ENCODE measurements at regions of chr15 and their contacts with region 1.

Region 1: DNA sequence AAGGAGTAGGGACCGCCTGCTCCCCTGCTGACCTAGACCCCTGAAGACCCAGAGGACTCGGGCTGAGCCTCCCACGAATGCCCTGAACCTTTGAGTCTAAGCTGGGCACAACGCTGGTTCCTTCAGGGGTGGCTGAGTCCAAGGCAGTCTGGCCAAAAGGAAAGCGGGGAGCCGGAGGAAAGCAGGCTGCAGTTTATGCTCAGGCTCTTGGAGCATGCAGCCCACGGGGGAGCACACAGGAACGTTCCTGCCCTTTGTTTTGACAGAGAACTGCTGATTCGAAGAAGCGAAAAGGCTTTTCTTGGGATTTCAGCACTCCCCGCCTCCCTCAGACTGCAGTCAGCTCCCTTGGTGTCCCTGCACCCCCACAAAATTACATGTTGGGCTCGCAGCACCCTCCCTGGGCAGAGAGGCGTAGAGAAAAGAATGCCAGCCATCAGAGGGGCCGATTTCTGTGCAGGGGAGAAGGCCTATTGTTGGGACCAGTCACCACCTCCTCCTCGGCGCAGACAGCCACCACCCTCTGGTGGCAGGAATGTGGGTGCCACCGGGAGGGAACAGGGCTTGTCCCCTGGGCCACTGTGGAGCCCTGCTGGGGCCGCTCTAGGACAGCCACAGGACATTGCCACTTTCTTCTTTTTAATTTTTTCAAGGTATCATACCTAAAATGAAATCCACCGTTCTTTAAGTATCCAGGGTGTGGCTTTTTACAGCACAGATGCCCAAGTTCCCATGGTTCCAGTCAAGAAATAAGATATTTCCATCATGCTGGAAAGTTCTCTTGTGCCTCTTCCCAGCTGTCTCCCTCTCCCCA is 72.2 kb downstream of the SMAD6 start:
- DNase-seq: peak; percentile 68 to 95
- H3K4me3 ChIP-seq: peak overlapping the region in 1 of 4 experiments; percentile 23; a peak in 3 of 8 replicates
- H3K27ac ChIP-seq: peak overlapping the region; percentile 56
- H3K4me1 ChIP-seq: peaks cover 11 to 24% (median 18%) of the 10 kb centered on the region in 4 experiments
- H3K27me3 ChIP-seq: no peaks in the 10 kb centered on the region
- CTCF ChIP-seq: peak; percentile 94 to 95 (median 95)
- EP300 ChIP-seq: peak in 1 of 2 experiments; percentile 60; a peak in 1 of 3 replicates
- POLR2A ChIP-seq: no peak
- RAD21 ChIP-seq: peak; percentile 87 to 92

Region 2: GRCh38 chr15:66720206-66721006 is 53.8 kb before region 1 on chr15:
- CTCF ChIA-PET with region 1: interaction called, 11 read pairs
- POLR2A ChIA-PET with region 1: no interaction called
- DNase-seq: no peak
- H3K4me3 ChIP-seq: no peak overlapping the region
- H3K27ac ChIP-seq: no peak overlapping the region
- H3K4me1 ChIP-seq: peaks cover 0 to 4% (median 2%) of the 10 kb centered on the region in 4 experiments; a peak in 4 of 7 replicates
- H3K27me3 ChIP-seq: no peaks in the 10 kb centered on the region
- CTCF ChIP-seq: no peak
- EP300 ChIP-seq: no peak
- POLR2A ChIP-seq: no peak
- RAD21 ChIP-seq: no peak

Region 3: DNA sequence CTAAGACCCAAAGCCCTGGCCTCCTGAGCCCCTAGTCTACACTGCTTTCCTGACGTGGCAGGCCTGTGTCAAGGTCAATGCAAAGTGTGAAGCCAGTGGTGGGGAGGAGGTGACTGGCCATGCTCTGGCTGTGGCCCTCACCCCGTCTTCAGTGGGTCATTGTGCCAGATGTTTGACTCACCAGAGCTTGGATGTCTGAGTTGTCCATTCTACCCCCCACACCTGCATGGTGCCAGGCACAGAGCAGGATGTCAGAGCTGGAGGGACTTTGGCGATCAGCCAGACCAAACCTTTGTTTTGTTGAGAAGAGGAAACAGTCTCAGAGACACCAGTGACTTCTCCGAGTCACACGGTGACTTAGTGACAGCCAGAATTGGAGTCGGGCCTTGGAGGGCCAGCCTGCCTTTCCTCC is 22.7 kb before region 1 on chr15:
- CTCF ChIA-PET with region 1: interaction called, 31 read pairs
- POLR2A ChIA-PET with region 1: no interaction called
- DNase-seq: no peak
- H3K4me3 ChIP-seq: no peak overlapping the region
- H3K27ac ChIP-seq: no peak overlapping the region
- H3K4me1 ChIP-seq: peaks cover 2 to 34% (median 14%) of the 10 kb centered on the region in 4 experiments; a peak in 6 of 7 replicates
- H3K27me3 ChIP-seq: no peaks in the 10 kb centered on the region; a peak in 1 of 7 replicates
- CTCF ChIP-seq: no peak
- EP300 ChIP-seq: no peak
- POLR2A ChIP-seq: no peak
- RAD21 ChIP-seq: no peak

Region 4: DNA sequence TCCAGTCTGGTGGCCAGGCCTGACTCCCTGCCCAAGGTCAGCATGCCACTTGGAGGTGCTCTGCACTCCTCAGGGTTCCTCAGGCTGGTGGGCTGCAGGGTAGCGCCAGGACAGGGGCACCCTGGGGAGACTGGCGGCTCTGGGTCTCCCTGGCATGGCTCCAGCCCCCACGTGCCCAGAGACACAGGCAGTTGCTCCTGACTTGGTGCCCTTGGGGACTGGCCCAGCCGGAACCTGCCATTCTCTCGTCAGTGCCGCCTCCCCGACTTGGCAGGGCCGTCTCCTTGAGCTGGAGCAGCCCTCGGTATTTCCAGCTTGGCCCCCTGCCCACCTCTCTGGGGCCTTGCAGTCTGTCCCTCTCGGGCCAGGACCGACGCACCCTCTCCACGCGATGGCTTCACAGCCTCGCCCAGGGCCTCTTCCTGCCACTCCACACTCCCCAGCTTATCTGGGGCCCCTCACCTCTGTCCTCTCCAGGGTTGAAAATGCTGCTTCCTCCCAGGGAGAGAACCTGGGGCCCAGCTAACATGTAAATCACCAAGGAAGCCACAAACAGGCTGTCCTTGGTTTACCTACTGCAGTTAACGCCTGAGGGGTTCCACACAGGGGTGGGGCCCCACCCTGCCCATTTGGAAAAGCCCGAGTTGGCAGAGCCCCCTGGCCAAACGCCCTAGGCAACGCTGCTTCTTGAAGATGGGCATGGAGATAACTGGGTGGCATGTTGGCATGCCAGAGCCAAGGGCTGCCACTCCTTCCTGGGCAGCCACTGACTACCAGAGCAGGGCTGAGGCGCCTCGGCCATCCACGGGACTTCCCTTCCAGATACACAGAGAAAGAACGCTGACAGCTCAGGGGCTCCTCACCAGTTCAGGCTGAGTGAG is 10.8 kb before region 1 on chr15:
- CTCF ChIA-PET with region 1: interaction called, 13 read pairs
- POLR2A ChIA-PET with region 1: interaction called, 9 read pairs
- DNase-seq: no peak
- H3K4me3 ChIP-seq: no peak overlapping the region
- H3K27ac ChIP-seq: no peak overlapping the region
- H3K4me1 ChIP-seq: peaks cover 0 to 4% (median 2%) of the 10 kb centered on the region in 4 experiments; a peak in 3 of 7 replicates
- H3K27me3 ChIP-seq: no peaks in the 10 kb centered on the region
- CTCF ChIP-seq: no peak
- EP300 ChIP-seq: no peak
- POLR2A ChIP-seq: no peak
- RAD21 ChIP-seq: no peak

Region 5: GRCh38 chr15:66789029-66790025 is 15.1 kb after region 1 on chr15:
- CTCF ChIA-PET with region 1: interaction called, 32 read pairs
- POLR2A ChIA-PET with region 1: interaction called, 3 read pairs
- DNase-seq: no peak
- H3K4me3 ChIP-seq: no peak overlapping the region
- H3K27ac ChIP-seq: no peak overlapping the region
- H3K4me1 ChIP-seq: no peaks in the 10 kb centered on the region
- H3K27me3 ChIP-seq: no peaks in the 10 kb centered on the region; a peak in 1 of 7 replicates
- CTCF ChIP-seq: peak; percentile 56 to 72 (median 68)
- EP300 ChIP-seq: no peak
- POLR2A ChIP-seq: no peak
- RAD21 ChIP-seq: peak; percentile 60 to 71